ENCODE measurements at regions of chr15 and their contacts with region 1.

Region 1: DNA sequence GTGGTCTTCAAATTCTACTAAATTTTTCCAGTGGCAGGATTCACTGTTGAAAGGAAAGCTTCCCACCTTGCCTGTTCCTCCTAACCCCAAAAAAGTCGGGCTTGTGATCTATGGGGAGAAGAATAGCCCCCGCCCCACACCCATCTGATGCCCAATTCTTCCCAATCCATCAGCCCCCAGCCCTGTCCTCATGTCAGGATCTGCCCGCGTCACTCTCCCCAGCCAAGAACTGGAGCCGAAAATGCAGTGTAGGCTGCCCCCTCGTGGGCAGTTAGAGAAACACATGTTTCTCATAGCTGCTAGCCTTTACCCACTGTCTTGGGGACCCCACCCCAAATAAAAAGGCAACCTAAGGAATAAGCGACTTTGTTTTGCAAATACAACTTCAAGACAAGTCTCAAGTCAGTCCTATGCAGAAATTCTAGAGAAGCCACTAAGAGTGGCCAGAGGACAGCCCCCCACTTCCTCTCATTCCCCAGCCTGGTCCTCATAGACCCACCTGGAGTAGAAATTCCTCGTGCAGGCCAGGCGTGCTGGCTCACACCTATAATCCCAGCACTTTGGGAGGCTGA is 13.0 kb upstream of the CSK start:
- DNase-seq: peak; percentile 80
- H3K4me3 Mint-ChIP-seq: no peak overlapping the region
- H3K27ac Mint-ChIP-seq: peak overlapping the region; percentile 25
- H3K4me1 Mint-ChIP-seq: peaks cover 24% of the 10 kb centered on the region
- H3K27me3 Mint-ChIP-seq: no peaks in the 10 kb centered on the region

Region 2: DNA sequence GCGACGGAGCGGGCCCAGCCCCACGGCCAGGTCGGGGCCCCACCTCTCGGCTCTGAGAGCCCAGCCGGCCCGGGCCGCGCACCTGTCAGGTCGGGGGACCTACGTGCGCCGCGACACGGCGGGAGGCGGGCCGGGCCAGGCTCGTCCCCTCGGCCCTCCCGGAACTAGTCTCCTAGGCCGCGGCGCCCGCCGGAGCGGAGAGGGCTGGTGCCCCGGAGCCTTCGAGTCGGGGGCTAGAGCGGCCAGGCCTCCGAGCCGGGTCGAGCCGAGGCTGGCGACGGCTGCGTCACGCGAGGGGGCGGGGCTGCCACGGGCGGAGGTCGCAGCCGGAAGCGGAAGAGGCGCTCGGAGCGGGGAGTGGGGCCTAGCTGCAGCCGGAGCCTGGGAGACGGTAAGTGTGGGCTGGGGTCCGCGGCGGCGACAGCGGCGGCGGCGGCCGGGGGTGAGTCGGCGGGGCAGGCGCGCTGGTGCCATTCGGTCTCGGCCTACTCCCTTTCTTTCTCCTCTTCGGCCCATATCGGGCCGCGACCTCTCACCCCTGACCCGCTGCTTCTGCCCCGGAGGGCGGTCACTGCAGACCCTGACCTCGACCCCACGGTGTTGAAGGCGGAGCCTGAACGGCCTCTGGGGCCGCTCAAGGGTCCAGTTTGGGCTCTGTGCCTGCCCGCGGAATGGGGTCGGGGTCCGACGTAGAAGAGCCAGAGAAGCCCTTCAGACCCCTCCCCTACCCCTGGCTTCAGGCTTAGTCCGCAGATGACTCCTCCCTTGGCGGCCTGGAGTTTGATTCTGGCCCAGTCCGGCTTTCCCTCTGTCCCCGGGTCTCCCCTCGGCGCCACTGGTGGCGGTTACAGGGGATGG is 153.1 kb before region 1 on chr15 and contains the start of gene CLK3:
- CTCF ChIA-PET with region 1: interaction called, 40 read pairs
- intact Hi-C with region 1: no loop called
- DNase-seq: peak; percentile 97
- H3K4me3 Mint-ChIP-seq: peak within 1 kb of the TSS; percentile 90
- H3K27ac Mint-ChIP-seq: peak within 1 kb of the TSS; percentile 95
- H3K4me1 Mint-ChIP-seq: peaks cover 39% of the 10 kb centered on the region
- H3K27me3 Mint-ChIP-seq: no peaks in the 10 kb centered on the region
- total RNA-seq, gene CLK3: 124 TPM

Region 3: GRCh38 chr15:74651242-74651741 is 117.6 kb before region 1 on chr15:
- CTCF ChIA-PET with region 1: interaction called, 10 read pairs
- intact Hi-C with region 1: no loop called
- DNase-seq: no peak
- H3K4me3 Mint-ChIP-seq: no peak overlapping the region
- H3K27ac Mint-ChIP-seq: no peak overlapping the region
- H3K4me1 Mint-ChIP-seq: peaks cover 8% of the 10 kb centered on the region
- H3K27me3 Mint-ChIP-seq: no peaks in the 10 kb centered on the region

Region 4: GRCh38 chr15:74799856-74800547 is 31.1 kb after region 1 on chr15:
- CTCF ChIA-PET with region 1: interaction called, 1,193 read pairs
- intact Hi-C with region 1: loop called (anchors 1 kb)
- DNase-seq: peak; percentile 94
- H3K4me3 Mint-ChIP-seq: peak overlapping the region; percentile 46
- H3K27ac Mint-ChIP-seq: peak overlapping the region; percentile 95
- H3K4me1 Mint-ChIP-seq: peaks cover 56% of the 10 kb centered on the region
- H3K27me3 Mint-ChIP-seq: no peaks in the 10 kb centered on the region

Region 5: GRCh38 chr15:74842581-74843444 is 74.0 kb after region 1 on chr15 and contains the start of gene ULK3:
- CTCF ChIA-PET with region 1: interaction called, 35 read pairs
- intact Hi-C with region 1: loop called (anchors 2 kb)
- DNase-seq: peak; percentile 93
- H3K4me3 Mint-ChIP-seq: peak within 1 kb of the TSS; percentile 86
- H3K27ac Mint-ChIP-seq: peak within 1 kb of the TSS; percentile 89
- H3K4me1 Mint-ChIP-seq: peaks cover 44% of the 10 kb centered on the region
- H3K27me3 Mint-ChIP-seq: no peaks in the 10 kb centered on the region
- total RNA-seq, gene ULK3: 58.9 to 69.2 TPM

Region 6: GRCh38 chr15:74988007-74988800 is 219.3 kb after region 1 on chr15:
- CTCF ChIA-PET with region 1: no interaction called
- intact Hi-C with region 1: loop called (anchors 1 kb)
- DNase-seq: peak; percentile 73
- H3K4me3 Mint-ChIP-seq: no peak overlapping the region
- H3K27ac Mint-ChIP-seq: no peak overlapping the region
- H3K4me1 Mint-ChIP-seq: peaks cover 11% of the 10 kb centered on the region
- H3K27me3 Mint-ChIP-seq: peaks cover 6% of the 10 kb centered on the region

Region 7: GRCh38 chr15:75112848-75113492 is 344.1 kb after region 1 on chr15:
- CTCF ChIA-PET with region 1: no interaction called
- intact Hi-C with region 1: no loop called
- DNase-seq: no peak
- H3K4me3 Mint-ChIP-seq: no peak overlapping the region
- H3K27ac Mint-ChIP-seq: no peak overlapping the region
- H3K4me1 Mint-ChIP-seq: peaks cover 15% of the 10 kb centered on the region
- H3K27me3 Mint-ChIP-seq: peaks cover 32% of the 10 kb centered on the region

Measured in activated naive CD4-positive, alpha-beta T cell treated with anti-CD3 and anti-CD28 coated beads for 36 hours (primary cell).